ENCODE measurements at regions of chr5 and their contacts with region 1.

Region 1: DNA sequence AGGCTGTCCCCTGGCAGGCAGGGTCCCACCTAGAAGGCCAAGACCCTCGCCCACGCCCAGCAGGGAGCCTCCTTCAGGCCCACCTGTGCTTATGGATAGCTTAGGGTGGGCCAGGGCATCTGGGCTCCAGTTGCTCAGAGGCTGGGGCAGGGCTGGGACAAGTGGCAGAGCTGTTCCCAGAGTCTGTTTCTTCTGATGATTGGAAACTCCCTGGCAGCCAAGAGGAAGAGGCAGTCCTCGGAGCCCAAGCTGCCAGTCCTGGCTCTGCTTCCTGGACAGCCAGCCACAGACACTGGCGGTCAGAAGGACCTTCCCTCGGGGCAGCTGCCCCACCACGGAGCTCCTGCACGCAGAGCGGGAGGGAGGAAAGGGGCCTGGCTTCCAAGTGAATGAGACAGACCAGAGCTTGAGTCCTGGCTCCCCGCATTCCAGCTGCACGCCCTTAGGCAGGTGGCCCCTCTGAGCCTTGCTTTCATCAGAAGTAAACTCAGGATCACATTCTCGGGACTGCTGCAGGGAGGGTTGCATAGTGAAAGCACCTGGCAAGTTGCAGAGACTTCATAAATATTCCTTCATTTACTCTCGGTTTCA is 37.9 kb upstream of the GABRP start:
- DNase-seq: peak; percentile 8
- ATAC-seq: peak; percentile 25
- H3K4me3 ChIP-seq: no peak overlapping the region
- H3K27ac ChIP-seq: no peak overlapping the region
- H3K4me1 ChIP-seq: no peaks in the 10 kb centered on the region; the same call in 1 of the 2 replicates
- H3K27me3 ChIP-seq: no peaks in the 10 kb centered on the region
- CTCF ChIP-seq: no peak

Region 2: GRCh38 chr5:170774836-170775235 is 29.3 kb after region 1 on chr5:
- CTCF ChIA-PET with region 1: no interaction called
- POLR2A ChIA-PET with region 1: no interaction called
- intact Hi-C with region 1: loop called (anchors 1 kb)
- DNase-seq: no peak
- ATAC-seq: no peak
- H3K4me3 ChIP-seq: no peak overlapping the region
- H3K27ac ChIP-seq: no peak overlapping the region
- H3K4me1 ChIP-seq: no peaks in the 10 kb centered on the region
- H3K27me3 ChIP-seq: peaks cover under 1% of the 10 kb centered on the region; the same call in 1 of the 2 replicates
- CTCF ChIP-seq: peak; percentile 32; the same call in 1 of the 2 replicates

Region 3: GRCh38 chr5:170791325-170791954 is 45.9 kb after region 1 on chr5:
- CTCF ChIA-PET with region 1: interaction called, 16 read pairs
- POLR2A ChIA-PET with region 1: no interaction called
- intact Hi-C with region 1: loop called (anchors 1 kb)
- DNase-seq: peak; percentile 64
- ATAC-seq: peak; percentile 77
- H3K4me3 ChIP-seq: no peak overlapping the region
- H3K27ac ChIP-seq: no peak overlapping the region
- H3K4me1 ChIP-seq: no peaks in the 10 kb centered on the region
- H3K27me3 ChIP-seq: no peaks in the 10 kb centered on the region
- CTCF ChIP-seq: peak; percentile 69

Region 4: DNA sequence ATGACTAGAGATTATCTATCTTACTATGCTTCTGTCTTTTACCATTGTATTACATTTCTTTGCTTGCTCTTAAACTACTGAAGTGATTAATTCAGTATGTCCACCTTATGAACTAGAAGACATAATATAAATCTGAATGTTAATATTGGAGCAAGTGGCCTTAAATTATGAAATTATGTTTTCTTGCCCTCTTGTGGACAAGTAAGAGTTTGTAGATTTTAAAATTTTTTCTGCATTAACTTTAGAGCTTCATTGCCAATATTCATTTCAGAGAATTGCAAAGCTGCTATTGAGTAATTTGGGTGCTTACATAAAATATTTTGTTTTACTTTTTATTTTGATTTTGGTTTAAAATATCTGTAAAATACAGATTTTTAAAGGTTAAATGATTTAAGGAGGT is 171.5 kb after region 1 on chr5:
- CTCF ChIA-PET with region 1: no interaction called
- POLR2A ChIA-PET with region 1: no interaction called
- intact Hi-C with region 1: loop called (anchors 2 kb)
- DNase-seq: no peak
- ATAC-seq: no peak
- H3K4me3 ChIP-seq: no peak overlapping the region
- H3K27ac ChIP-seq: no peak overlapping the region
- H3K4me1 ChIP-seq: no peaks in the 10 kb centered on the region
- H3K27me3 ChIP-seq: no peaks in the 10 kb centered on the region
- CTCF ChIP-seq: peak; percentile 43; the same call in 1 of the 2 replicates

Region 5: DNA sequence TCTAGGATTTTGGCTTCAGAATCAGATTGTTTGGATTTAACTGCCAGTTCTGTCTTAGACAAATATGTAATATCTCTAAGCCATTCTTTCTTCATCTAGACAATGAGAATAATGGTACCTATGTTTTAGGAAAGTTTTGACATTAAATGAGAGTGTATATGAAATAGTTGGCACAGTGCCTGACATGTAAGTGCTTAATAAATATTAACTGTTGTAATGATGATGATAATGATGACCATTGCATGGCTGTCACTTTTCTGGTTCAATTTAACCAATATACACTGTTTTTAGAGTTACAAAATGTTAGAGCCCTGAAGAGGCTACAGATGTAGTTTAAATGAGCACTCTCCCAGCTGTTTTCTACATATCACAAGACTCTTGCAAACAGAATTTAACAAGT is 247.9 kb after region 1 on chr5:
- CTCF ChIA-PET with region 1: no interaction called
- POLR2A ChIA-PET with region 1: no interaction called
- intact Hi-C with region 1: no loop called
- DNase-seq: no peak
- ATAC-seq: no peak
- H3K4me3 ChIP-seq: no peak overlapping the region
- H3K27ac ChIP-seq: no peak overlapping the region
- H3K4me1 ChIP-seq: no peaks in the 10 kb centered on the region
- H3K27me3 ChIP-seq: no peaks in the 10 kb centered on the region
- CTCF ChIP-seq: no peak

Measured in PC-3 (cell line).